Mammary epithelial cell (primary cell): ENCODE measurements at regions of chr4 and their contacts with region 1.

Region 1: DNA sequence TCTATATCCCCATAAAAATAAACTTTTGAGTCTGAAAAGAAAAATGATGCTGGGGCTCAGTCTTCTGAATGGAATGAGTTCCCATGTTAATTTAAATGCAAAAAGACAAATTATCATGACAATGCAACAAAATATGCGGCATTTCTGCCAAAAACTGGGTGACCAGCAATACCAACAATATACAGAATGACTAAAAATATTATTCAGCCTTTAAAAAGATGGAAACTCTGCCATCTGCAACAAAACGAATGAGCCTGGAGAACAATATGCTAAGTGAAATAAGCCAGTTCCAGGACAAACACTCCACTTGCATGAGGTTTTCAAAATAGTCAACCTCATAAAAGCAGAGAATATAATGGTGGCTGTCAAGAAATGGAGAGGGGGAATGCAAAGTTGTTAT is 558.5 kb downstream of the IL15 start:
- DNase-seq: no peak
- H3K4me3 ChIP-seq: no peak overlapping the region
- H3K27ac ChIP-seq: no peak overlapping the region
- H3K4me1 ChIP-seq: no peaks in the 10 kb centered on the region
- H3K27me3 ChIP-seq: no peaks in the 10 kb centered on the region
- CTCF ChIP-seq: no peak

Region 2: DNA sequence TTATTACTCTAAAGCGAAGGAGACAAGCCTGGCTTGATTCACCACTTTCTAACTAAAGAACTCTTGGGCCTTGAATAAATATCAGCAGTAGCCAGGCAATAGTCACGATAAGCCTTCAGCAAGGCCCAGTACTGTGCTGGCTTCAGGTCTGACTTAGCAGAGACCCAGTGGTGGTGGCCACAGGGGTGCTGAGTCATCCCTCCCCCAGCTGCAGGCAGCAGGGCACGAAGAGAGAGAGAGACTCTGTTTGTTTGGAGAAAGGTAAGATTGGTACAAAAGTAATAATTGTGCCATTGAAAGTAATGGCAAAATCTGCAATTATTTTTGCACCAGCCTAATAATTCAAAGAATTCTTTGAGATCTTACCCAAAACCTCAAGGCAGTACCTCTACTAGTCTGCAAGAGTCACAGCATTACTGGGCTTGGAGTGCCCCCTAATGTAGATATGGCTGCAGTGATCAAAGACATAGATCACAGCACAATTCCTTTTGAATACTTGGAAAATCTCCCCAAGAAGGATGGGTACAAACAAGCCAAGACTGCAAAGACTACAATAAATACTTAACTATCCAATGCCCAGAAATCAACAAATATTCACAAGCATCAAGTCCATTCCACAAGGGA is 830.3 kb after region 1 on chr4:
- CTCF ChIA-PET with region 1: no interaction called
- dilution Hi-C with region 1: no loop called
- in situ Hi-C with region 1: no loop called
- intact Hi-C with region 1: loop called (anchors 10 kb)
- DNase-seq: peak; percentile 21
- H3K4me3 ChIP-seq: no peak overlapping the region
- H3K27ac ChIP-seq: no peak overlapping the region
- H3K4me1 ChIP-seq: no peaks in the 10 kb centered on the region
- H3K27me3 ChIP-seq: no peaks in the 10 kb centered on the region
- CTCF ChIP-seq: peak in 1 of 2 donors; percentile 31